ENCODE measurements at regions of chr4 and their contacts with region 1.

Region 1: DNA sequence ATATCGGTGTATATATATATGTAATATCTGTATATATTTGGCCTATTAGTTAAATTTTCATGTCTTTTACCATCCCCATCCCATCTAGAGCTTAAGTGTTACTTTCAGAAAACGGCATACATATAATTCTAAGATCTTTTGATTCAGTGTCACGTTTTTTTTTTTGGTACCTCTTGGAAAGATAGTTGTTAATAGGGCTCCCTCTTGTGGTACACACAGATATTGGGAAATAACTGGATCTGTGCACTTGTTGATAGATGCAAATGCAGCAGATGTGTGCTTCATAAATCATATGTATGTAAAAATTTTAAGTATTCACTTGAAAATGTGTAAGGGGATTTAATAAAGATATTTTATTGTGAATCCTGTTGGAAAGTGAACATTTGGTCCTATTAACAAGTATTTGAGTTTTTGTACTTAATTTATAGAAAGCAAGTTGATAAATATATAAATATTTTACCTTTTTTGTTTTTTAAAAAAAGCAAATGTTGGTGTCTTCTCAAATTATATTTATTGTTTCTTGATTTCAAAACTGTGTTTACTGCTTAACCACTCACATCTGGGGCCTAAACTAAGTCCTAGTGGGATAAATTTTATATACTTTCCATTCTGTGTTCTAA is 74.7 kb downstream of the PAQR3 start:
- DNase-seq: no peak
- ATAC-seq: peak; percentile 60 to 87 (median 76)
- H3K4me3 ChIP-seq: no peak overlapping the region
- H3K27ac ChIP-seq: no peak overlapping the region
- H3K4me1 ChIP-seq: no peaks in the 10 kb centered on the region
- H3K27me3 ChIP-seq: no peaks in the 10 kb centered on the region
- CTCF ChIP-seq: peak; percentile 86

Region 2: DNA sequence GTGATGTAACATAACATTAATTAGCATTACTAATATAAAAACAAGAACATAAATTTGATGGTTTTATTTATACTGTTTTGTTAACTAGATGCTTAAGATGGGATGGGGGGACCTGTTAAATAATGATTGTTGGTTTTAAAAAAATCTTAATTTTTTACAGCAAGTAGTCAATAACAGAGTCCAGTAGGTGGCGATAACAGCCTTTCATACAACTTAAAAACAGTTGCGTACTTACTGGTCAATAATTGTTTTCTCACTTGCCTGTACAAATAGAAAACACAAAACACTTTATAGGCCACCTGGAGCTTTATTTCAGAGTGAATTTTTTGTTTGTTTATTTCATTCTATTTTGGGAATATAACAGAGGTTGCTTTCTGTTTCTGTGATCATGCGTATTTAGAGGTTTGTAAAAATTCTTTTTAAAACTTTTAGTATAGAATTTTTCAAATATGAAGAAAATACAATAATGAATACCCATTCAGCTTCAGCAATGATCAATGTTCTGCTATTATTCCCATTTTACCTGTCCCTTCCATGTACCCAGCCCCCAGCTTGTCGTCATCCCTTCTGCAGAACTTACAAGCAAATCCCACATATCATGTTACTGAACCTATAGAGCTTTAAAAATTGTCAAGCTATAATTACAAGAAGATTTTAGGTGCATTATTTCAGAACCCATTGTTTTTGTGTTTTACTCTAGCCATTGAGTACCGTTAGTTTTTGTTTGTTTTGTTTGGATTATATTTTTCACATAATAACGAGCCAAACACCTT is 904.8 kb before region 1 on chr4:
- intact Hi-C with region 1: loop called in 1 of 2 experiments (anchors 10 kb)
- DNase-seq: no peak
- ATAC-seq: peak in 2 of 4 donors; percentile 47 to 85
- H3K4me3 ChIP-seq: peak overlapping the region; percentile 51
- H3K27ac ChIP-seq: no peak overlapping the region
- H3K4me1 ChIP-seq: peaks cover 6% of the 10 kb centered on the region
- H3K27me3 ChIP-seq: no peaks in the 10 kb centered on the region
- CTCF ChIP-seq: peak; percentile 74

Region 3: GRCh38 chr4:78612398-78613178 is 251.9 kb before region 1 on chr4:
- intact Hi-C with region 1: loop called (anchors 2 to 5 kb)
- DNase-seq: no peak
- ATAC-seq: peak in 3 of 4 donors; percentile 49 to 79 (median 60)
- H3K4me3 ChIP-seq: no peak overlapping the region
- H3K27ac ChIP-seq: no peak overlapping the region
- H3K4me1 ChIP-seq: no peaks in the 10 kb centered on the region
- H3K27me3 ChIP-seq: no peaks in the 10 kb centered on the region
- CTCF ChIP-seq: peak; percentile 60

Region 4: GRCh38 chr4:78775303-78776030 is 89.0 kb before region 1 on chr4:
- intact Hi-C with region 1: loop called (anchors 5 kb)
- DNase-seq: peak; percentile 89 to 94
- ATAC-seq: peak; percentile 92 to 95 (median 94)
- H3K4me3 ChIP-seq: peak overlapping the region; percentile 90
- H3K27ac ChIP-seq: peak overlapping the region; percentile 99
- H3K4me1 ChIP-seq: peaks cover 32% of the 10 kb centered on the region
- H3K27me3 ChIP-seq: no peaks in the 10 kb centered on the region
- CTCF ChIP-seq: no peak

Measured in psoas muscle (tissue), 8 donors.